Panc1 (cell line): ENCODE measurements at regions of chr11 and their contacts with region 1.

Region 1: DNA sequence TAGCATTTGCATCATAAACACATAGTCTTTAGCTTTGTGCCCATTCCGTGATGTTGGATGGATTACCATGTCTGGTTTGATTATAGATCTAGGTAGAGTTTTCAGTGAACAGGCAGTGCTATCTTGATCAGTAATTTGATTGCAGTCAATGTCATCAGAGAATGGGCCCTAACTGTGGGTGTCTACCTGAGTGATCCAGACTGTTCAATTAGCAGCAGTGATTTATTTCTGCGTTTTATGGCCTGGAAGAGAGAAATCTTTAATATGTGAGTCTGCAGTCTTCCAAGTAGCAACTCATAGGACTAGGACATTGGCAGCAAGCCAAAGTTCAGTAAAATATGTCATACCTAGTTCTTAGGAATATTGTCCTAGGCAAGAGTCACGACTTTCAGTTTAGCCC is 80.3 kb downstream of the CASP12 start:
- DNase-seq: no peak
- ATAC-seq: no peak
- H3K4me3 ChIP-seq: no peak overlapping the region
- H3K27ac ChIP-seq: no peak overlapping the region
- H3K4me1 ChIP-seq: no peaks in the 10 kb centered on the region
- H3K27me3 ChIP-seq: no peaks in the 10 kb centered on the region
- CTCF ChIP-seq: no peak

Region 2: DNA sequence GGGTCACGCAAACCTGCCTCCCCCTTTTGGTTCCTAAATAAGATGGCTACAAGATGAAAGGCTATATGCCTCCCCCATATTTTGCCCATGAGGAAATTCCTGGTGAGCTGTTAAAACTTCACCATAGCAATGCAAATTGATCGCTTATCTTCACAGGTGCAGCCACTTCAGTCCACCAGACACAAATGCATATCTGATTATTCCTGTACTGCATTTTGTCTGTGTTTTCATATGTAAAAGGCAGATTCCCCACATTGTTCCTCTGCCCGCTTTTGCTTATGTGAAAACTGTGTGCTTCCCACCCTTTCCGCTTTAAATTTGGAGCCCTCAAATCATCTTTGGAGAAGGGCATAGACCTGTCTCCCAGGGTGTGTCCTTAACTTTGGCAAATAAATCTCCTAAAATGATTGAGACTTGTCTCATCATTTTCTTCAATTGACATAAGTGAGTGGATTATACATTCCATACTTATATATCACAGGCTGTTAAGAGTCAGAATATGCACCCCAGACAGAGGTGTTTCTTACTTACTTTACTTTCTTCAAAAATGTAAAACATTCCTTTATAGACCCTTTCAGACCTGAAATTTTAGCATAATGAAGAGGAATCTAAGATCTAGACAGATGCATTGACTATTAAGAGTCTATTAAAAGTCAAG is 36.1 kb before region 1 on chr11:
- CTCF ChIA-PET with region 1: no interaction called
- POLR2A ChIA-PET with region 1: no interaction called
- in situ Hi-C with region 1: no loop called
- intact Hi-C with region 1: loop called (anchors 1 kb)
- DNase-seq: no peak
- ATAC-seq: no peak
- H3K4me3 ChIP-seq: no peak overlapping the region
- H3K27ac ChIP-seq: no peak overlapping the region
- H3K4me1 ChIP-seq: no peaks in the 10 kb centered on the region
- H3K27me3 ChIP-seq: no peaks in the 10 kb centered on the region
- CTCF ChIP-seq: no peak